ENCODE measurements at regions of chr5 and their contacts with region 1.

Region 1: GRCh38 chr5:337563-338130 is 16.1 kb downstream of the AHRR start:
- DNase-seq: no peak
- H3K4me3 Mint-ChIP-seq: no peak overlapping the region
- H3K27ac Mint-ChIP-seq: no peak overlapping the region
- H3K4me1 Mint-ChIP-seq: peaks cover 71% of the 10 kb centered on the region
- H3K27me3 Mint-ChIP-seq: no peaks in the 10 kb centered on the region

Region 2: GRCh38 chr5:42243-42642 is 295.4 kb before region 1 on chr5:
- intact Hi-C with region 1: no loop called
- DNase-seq: no peak
- H3K4me3 Mint-ChIP-seq: no peak overlapping the region
- H3K27ac Mint-ChIP-seq: no peak overlapping the region
- H3K4me1 Mint-ChIP-seq: no peaks in the 10 kb centered on the region
- H3K27me3 Mint-ChIP-seq: peaks cover 10% of the 10 kb centered on the region

Region 3: DNA sequence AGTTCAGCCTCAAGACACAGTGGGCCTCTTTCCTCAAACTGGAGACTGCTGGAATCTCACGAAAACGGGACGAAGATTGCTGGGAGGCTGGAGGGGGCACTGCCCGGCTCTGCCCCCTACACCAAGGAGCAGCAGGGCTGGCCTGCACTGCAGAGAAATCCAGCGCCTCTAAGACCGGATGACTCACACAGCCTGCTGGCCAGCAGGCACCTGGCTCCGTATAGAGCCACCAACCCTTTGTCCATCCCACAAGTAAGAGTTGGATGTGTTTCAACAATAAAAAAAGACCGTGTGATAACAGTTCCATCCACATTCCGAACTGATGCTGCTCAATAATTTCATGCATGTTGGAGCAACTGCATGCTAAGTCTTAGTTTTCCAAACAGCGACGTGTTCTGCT is 131.2 kb before region 1 on chr5:
- intact Hi-C with region 1: no loop called
- DNase-seq: no peak
- H3K4me3 Mint-ChIP-seq: no peak overlapping the region
- H3K27ac Mint-ChIP-seq: no peak overlapping the region
- H3K4me1 Mint-ChIP-seq: peaks cover 13% of the 10 kb centered on the region
- H3K27me3 Mint-ChIP-seq: no peaks in the 10 kb centered on the region

Region 4: DNA sequence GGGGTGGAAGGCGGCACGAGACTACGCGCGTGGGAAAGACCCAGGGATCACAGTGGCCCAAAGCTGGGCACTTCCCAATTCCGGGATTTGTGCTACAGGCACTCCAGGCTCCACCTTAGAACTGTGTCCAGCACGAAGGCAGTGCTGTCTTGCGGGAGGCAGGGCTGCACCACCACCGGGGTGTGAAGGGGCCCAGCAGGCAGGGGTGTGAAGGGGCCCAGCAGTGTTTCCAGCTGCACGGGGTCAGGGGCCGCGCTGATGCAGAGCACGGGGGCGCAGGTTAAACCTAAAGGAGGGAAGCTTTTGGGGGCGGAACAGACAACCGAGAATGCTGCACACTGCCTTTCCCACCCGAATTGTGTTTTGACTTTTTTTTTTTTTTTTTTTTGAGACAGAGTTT is 67.3 kb before region 1 on chr5:
- intact Hi-C with region 1: loop called (anchors 10 kb)
- DNase-seq: no peak
- H3K4me3 Mint-ChIP-seq: peak overlapping the region; percentile 92
- H3K27ac Mint-ChIP-seq: peak overlapping the region; percentile 76
- H3K4me1 Mint-ChIP-seq: peaks cover 41% of the 10 kb centered on the region
- H3K27me3 Mint-ChIP-seq: no peaks in the 10 kb centered on the region

Region 5: GRCh38 chr5:322281-322941 is 15.2 kb before region 1 on chr5:
- intact Hi-C with region 1: loop called (anchors 1 kb)
- DNase-seq: no peak
- H3K4me3 Mint-ChIP-seq: peak overlapping the region; percentile 76
- H3K27ac Mint-ChIP-seq: no peak overlapping the region
- H3K4me1 Mint-ChIP-seq: peaks cover 20% of the 10 kb centered on the region
- H3K27me3 Mint-ChIP-seq: peaks cover 6% of the 10 kb centered on the region

Region 6: DNA sequence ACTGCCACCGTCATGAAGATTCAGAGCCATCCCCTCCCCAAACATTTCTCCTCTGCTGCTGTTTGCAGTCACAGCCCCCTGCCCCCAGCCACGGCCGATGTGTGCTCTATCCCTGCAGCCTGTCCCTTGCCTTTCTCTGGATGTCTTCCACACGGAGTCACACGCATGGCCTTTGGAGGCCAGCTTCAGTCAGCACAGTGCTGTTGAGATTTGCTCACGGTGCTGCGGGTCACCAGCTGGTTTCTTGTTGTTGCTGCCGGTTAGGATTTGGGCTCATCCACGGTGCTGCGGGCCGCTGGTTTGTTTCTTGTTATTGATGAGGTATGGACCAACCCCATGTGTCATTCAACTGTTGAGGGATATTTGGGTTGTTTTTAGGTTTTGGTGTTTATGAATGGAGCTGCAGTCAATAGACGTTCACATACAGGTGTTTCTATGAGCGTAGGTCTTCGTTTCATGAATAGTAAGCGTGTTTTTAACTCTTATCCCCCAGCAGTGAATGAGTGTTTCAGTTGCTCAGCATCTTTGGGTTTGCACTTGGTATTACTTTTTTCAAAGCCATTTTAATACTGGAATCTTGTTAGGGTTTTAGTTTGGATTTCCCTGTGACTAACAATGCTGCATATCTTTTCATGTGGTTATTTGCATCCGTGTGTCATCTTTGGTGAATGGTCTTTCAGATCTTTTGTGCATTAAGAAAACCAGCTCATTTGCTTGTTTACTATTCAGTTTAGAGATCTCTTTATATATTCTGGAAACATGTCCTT is 41.5 kb after region 1 on chr5:
- intact Hi-C with region 1: loop called (anchors 1 kb)
- DNase-seq: peak; percentile 8
- H3K4me3 Mint-ChIP-seq: peak overlapping the region; percentile 51
- H3K27ac Mint-ChIP-seq: peak overlapping the region; percentile 87
- H3K4me1 Mint-ChIP-seq: peaks cover 64% of the 10 kb centered on the region
- H3K27me3 Mint-ChIP-seq: no peaks in the 10 kb centered on the region

Region 7: GRCh38 chr5:411728-412127 is 74.1 kb after region 1 on chr5:
- intact Hi-C with region 1: loop called (anchors 2 kb)
- DNase-seq: no peak
- H3K4me3 Mint-ChIP-seq: no peak overlapping the region
- H3K27ac Mint-ChIP-seq: peak overlapping the region; percentile 69
- H3K4me1 Mint-ChIP-seq: peaks cover 33% of the 10 kb centered on the region
- H3K27me3 Mint-ChIP-seq: no peaks in the 10 kb centered on the region

Measured in activated T-helper 2 cell treated with anti-CD3 and anti-CD28 coated beads, Interferon-gamma antibody, Interleukin-2, Interleukin-4, amounts not matched to agents 10 μg/mL and 5 μg/mL and 100 μg/mL, durations not matched to agents 14 hours and 24 hours and 36 hours (primary cell).